ENCODE measurements at regions of chr5 and their contacts with region 1.

Region 1: DNA sequence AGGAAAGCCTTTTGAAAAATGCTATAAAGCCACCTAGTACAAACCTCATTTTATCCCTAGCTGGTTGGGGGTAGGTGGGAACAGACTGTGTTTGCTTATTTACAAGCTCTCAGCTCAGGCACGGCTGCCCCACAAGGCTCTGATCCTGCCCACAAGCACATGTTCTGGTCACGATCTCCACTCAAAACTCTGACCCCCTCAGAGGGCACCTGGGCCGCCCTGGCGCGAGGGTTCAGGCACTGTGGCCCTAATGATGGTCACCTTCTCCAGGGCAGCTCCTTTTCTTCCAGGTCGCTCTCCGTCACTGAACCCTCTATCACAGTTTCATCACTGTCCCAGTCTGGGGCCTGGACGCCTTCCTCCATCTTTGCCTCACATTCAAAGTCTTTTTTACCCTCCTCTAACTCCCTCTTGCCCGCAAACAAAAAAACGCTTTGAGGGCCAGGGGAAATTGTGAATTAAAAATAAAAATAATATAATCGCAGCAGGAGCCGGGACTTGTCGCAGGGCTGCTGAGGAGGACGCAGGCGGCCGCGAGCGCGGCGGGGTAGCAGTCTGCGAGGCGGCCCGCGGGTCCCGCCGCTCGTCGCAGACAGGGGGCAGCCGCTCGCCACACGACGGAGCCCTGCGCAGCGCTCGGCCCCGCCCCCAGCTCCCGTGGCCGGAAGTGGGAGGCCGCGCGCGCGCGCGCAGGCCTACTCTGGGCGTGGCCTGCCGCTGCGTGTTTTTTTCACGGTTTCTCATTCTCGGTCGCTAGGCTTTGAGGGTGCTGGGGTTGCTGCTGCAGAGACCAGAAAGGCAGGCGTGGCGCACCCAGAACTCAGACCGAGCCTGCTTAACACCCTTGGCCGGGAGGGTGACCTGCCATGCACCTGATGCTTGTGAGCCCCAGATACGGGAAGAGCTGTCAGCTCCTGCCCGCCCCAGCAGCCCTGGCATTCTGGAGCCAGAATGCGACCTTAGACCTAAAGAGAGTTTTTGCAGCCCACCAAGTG is at the start of gene ANKRD31:
- DNase-seq: peak; percentile 79 to 82
- ATAC-seq: peak; percentile 98 to 99
- H3K4me3 ChIP-seq: peak within 1 kb of the TSS; percentile 56
- H3K27ac ChIP-seq: peak within 1 kb of the TSS; percentile 81 to 89
- H3K4me1 ChIP-seq: peaks cover 15% of the 10 kb centered on the region
- CTCF ChIP-seq: peak; percentile 89
- EP300 ChIP-seq: no peak
- POLR2A ChIP-seq: peak; percentile 71
- RAD21 ChIP-seq: peak; percentile 71 to 93
- polyA plus RNA-seq, gene ANKRD31: 0.34 and 0.49 TPM in 2 replicates

Region 2: GRCh38 chr5:75053304-75054133 is 183.1 kb before region 1 on chr5:
- CTCF ChIA-PET with region 1: interaction called, 16 read pairs
- POLR2A ChIA-PET with region 1: interaction called, 9 read pairs
- DNase-seq: peak; percentile 40 to 78
- ATAC-seq: peak; percentile 71 to 75
- H3K4me3 ChIP-seq: peak overlapping the region; percentile 73
- H3K27ac ChIP-seq: peak overlapping the region; percentile 74 to 92
- H3K4me1 ChIP-seq: peaks cover 16% of the 10 kb centered on the region; the same call in 2 of the 3 replicates
- CTCF ChIP-seq: peak; percentile 35; the same call in 2 of the 3 replicates
- EP300 ChIP-seq: no peak
- POLR2A ChIP-seq: no peak
- RAD21 ChIP-seq: 0 out of 5 replicates have a peak, but pooled peaks of 1 of the 2 experiments have one; percentile 14

Region 3: DNA sequence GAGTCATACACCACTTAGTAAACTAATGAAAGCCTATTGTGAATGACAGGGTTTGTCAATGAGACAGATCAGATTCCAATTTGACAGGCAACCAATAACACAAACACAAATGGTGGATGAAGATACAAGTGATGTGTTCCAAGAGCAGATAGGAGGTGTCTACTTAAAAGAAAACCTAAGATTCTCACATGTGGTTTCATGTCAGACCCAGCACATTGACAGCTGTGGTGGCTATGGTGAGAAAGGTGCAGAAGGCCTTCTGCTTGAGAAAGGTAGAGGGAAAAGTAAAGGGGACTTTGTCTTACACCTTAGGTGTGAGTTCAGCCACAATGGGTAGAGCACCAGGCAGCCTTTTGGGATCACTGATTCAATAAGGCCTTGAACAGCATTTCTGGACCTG is 11.1 kb before region 1 on chr5:
- CTCF ChIA-PET with region 1: interaction called, 17 read pairs
- POLR2A ChIA-PET with region 1: interaction called, 3 read pairs
- DNase-seq: no peak
- ATAC-seq: no peak
- H3K4me3 ChIP-seq: no peak overlapping the region
- H3K27ac ChIP-seq: no peak overlapping the region
- H3K4me1 ChIP-seq: no peaks in the 10 kb centered on the region
- CTCF ChIP-seq: no peak
- EP300 ChIP-seq: no peak
- POLR2A ChIP-seq: no peak
- RAD21 ChIP-seq: no peak

Region 4: GRCh38 chr5:75331095-75332090 is 94.8 kb after region 1 on chr5:
- CTCF ChIA-PET with region 1: interaction called, 24 read pairs
- POLR2A ChIA-PET with region 1: interaction called, 22 read pairs
- DNase-seq: peak in 1 of 2 experiments; percentile 23
- ATAC-seq: no peak
- H3K4me3 ChIP-seq: no peak overlapping the region
- H3K27ac ChIP-seq: no peak overlapping the region
- H3K4me1 ChIP-seq: peaks cover 8% of the 10 kb centered on the region; the same call in 1 of the 3 replicates
- CTCF ChIP-seq: no peak
- EP300 ChIP-seq: no peak
- POLR2A ChIP-seq: no peak
- RAD21 ChIP-seq: no peak

Region 5: DNA sequence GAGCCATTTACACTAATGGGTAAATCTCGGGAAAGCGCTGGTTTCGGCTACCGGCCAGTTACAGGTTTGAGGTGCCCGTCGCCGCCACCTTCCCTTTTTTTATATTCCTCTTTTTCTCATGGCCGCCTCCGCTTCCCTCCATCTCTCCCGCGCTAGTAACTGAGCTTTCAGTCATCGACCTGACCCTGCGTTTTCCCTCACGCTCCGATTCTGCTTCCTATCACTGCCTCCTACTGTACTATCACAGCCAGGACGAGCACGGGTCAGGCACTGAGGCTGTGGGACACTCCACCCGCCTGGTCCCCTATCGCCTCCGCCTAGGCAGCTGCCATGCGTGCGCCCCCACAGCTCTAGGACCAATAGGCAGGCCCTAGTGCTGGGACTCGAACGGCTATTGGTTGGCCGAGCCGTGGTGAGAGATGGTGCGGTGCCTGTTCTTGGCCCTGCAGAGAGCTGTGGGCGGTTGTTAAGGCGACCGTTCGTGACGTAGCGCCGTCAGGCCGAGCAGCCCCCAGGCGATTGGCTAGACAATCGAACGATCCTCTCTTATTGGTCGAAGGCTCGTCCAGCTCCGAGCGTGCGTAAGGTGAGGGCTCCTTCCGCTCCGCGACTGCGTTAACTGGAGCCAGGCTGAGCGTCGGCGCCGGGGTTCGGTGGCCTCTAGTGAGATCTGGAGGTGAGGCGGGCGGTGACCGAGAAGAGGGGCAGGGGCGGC is 100.2 kb after region 1 on chr5 and contains the start of gene HMGCR:
- CTCF ChIA-PET with region 1: interaction called, 24 read pairs
- POLR2A ChIA-PET with region 1: interaction called, 22 read pairs
- DNase-seq: peak; percentile 88 to 100
- ATAC-seq: peak; percentile 97 to 98
- H3K4me3 ChIP-seq: peak within 1 kb of the TSS; percentile 84
- H3K27ac ChIP-seq: peak within 1 kb of the TSS; percentile 85 to 95
- H3K4me1 ChIP-seq: peaks cover 35% of the 10 kb centered on the region
- CTCF ChIP-seq: peak; percentile 30; the same call in 2 of the 3 replicates
- EP300 ChIP-seq: no peak
- POLR2A ChIP-seq: peak; percentile 92
- RAD21 ChIP-seq: peak; percentile 62 to 63; a peak in 4 of 5 replicates
- polyA plus RNA-seq, gene HMGCR: 25.9 and 30.1 TPM in 2 replicates

Region 6: GRCh38 chr5:75351139-75351926 is 114.7 kb after region 1 on chr5:
- CTCF ChIA-PET with region 1: interaction called, 14 read pairs
- POLR2A ChIA-PET with region 1: no interaction called
- DNase-seq: no peak
- ATAC-seq: no peak
- H3K4me3 ChIP-seq: no peak overlapping the region
- H3K27ac ChIP-seq: no peak overlapping the region
- H3K4me1 ChIP-seq: no peaks in the 10 kb centered on the region
- CTCF ChIP-seq: no peak
- EP300 ChIP-seq: no peak
- POLR2A ChIP-seq: no peak
- RAD21 ChIP-seq: no peak

Region 7: GRCh38 chr5:75681125-75681830 is 444.7 kb after region 1 on chr5:
- CTCF ChIA-PET with region 1: interaction called, 13 read pairs
- POLR2A ChIA-PET with region 1: interaction called, 5 read pairs
- DNase-seq: peak; percentile 19 to 31
- ATAC-seq: peak; percentile 66 to 68; a peak in 5 of 6 replicates
- H3K4me3 ChIP-seq: no peak overlapping the region
- H3K27ac ChIP-seq: no peak overlapping the region
- H3K4me1 ChIP-seq: peaks cover 6% of the 10 kb centered on the region; the same call in 2 of the 3 replicates
- CTCF ChIP-seq: peak; percentile 63
- EP300 ChIP-seq: no peak
- POLR2A ChIP-seq: no peak
- RAD21 ChIP-seq: peak; percentile 66 to 71